Activated CD4-positive, alpha-beta memory T cell treated with anti-CD3 and anti-CD28 coated beads, Interleukin-2, amount 10 ng/mL, durations not matched to agents 7 days and 5 days (primary cell): ENCODE measurements at regions of chr22 and their contacts with region 1.

Region 1: GRCh38 chr22:30005213-30005857 is 74.9 kb upstream of the HORMAD2 start:
- DNase-seq: peak; percentile 68
- H3K4me3 Mint-ChIP-seq: no peak overlapping the region
- H3K27ac Mint-ChIP-seq: no peak overlapping the region
- H3K4me1 Mint-ChIP-seq: no peaks in the 10 kb centered on the region
- H3K27me3 Mint-ChIP-seq: no peaks in the 10 kb centered on the region

Region 2: DNA sequence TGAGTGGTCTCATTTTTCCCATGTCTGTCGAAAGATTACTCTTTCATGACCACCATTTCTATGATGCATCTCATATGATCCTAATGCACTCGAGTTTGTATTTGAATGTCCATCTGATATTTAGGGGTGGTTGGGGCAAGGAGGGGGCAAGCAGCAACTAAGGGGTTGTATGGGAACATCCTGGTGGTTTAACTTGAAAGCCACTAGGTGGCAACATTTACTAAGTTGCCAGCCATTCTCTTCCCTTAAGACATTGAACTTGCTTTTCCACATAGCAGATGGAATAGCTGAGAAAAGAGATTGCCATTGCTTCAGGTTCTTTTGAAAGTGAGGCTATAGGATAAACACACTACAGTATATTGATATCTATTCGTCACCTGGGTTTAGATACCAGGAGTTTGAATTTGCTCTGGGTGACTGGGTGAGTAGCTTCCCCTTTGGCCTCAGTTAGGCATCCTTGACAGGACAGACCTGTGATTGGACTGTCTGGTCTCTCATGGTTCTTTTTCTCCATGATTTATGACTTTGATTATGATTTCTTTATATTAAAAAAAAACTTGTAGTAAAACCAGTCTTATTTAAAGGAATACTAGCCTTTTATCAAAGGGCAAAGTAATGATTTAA is 369.5 kb before region 1 on chr22:
- CTCF ChIA-PET with region 1: interaction called, 15 read pairs
- POLR2A ChIA-PET with region 1: no interaction called
- DNase-seq: no peak
- H3K4me3 Mint-ChIP-seq: no peak overlapping the region
- H3K27ac Mint-ChIP-seq: no peak overlapping the region
- H3K4me1 Mint-ChIP-seq: peaks cover 37% of the 10 kb centered on the region
- H3K27me3 Mint-ChIP-seq: no peaks in the 10 kb centered on the region

Region 3: DNA sequence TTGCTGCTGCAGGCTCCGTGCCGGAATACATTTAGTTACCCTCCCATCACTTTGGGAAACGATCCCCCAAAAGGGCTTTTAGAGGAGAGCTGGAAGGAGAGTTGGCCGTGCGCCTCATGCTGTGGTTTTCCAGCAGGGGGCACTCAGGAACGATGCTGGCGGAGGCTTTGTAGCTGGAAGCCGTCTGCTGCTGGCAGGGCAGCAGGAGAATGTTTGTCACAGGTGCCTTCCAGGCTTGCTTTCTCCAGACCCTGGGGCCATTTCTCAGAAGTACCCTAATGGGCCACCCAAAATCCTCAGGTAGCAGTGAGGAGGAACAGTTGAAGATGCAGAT is 315.5 kb before region 1 on chr22:
- CTCF ChIA-PET with region 1: interaction called, 17 read pairs
- POLR2A ChIA-PET with region 1: no interaction called
- DNase-seq: peak; percentile 47
- H3K4me3 Mint-ChIP-seq: no peak overlapping the region
- H3K27ac Mint-ChIP-seq: no peak overlapping the region
- H3K4me1 Mint-ChIP-seq: peaks cover 2% of the 10 kb centered on the region
- H3K27me3 Mint-ChIP-seq: no peaks in the 10 kb centered on the region

Region 4: GRCh38 chr22:29892315-29893156 is 112.8 kb before region 1 on chr22:
- CTCF ChIA-PET with region 1: no interaction called
- POLR2A ChIA-PET with region 1: no interaction called
- DNase-seq: no peak
- H3K4me3 Mint-ChIP-seq: no peak overlapping the region
- H3K27ac Mint-ChIP-seq: no peak overlapping the region
- H3K4me1 Mint-ChIP-seq: no peaks in the 10 kb centered on the region
- H3K27me3 Mint-ChIP-seq: no peaks in the 10 kb centered on the region

Region 5: DNA sequence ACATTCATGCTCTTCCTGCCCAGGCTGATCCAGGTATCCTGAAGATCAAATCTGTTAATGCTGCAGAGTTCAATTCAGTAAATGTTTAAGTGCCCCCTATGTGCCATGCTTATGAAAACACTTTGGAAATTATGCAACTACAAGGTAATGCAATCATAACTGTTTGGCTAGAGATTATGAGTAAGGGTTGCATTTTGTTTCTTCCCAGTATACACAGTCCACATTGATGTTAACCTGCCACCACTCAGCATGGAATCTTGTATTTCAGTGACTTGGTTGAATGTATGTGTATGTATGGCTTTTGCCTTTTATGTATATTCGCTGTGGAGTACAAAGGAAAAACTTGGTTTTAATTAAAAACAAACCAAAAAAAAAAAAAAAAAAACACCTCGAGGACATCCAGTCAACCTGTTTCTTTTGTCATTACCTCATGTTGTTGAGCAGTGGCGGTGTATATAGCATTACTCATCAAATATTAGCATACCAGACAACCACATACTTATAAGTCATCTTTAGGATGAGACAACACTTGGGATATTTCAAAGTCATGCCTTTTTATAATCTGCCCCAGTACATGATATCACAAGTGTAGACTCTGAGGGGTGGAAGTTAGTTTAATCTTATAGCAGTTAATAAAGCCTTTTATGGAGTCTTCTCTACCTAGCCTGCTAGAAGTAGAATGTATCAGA is 11.2 kb before region 1 on chr22:
- CTCF ChIA-PET with region 1: interaction called, 23 read pairs
- POLR2A ChIA-PET with region 1: no interaction called
- DNase-seq: no peak
- H3K4me3 Mint-ChIP-seq: no peak overlapping the region
- H3K27ac Mint-ChIP-seq: no peak overlapping the region
- H3K4me1 Mint-ChIP-seq: peaks cover 9% of the 10 kb centered on the region
- H3K27me3 Mint-ChIP-seq: no peaks in the 10 kb centered on the region

Region 6: GRCh38 chr22:30023099-30023660 is 17.8 kb after region 1 on chr22:
- CTCF ChIA-PET with region 1: interaction called, 10 read pairs
- POLR2A ChIA-PET with region 1: no interaction called
- DNase-seq: no peak
- H3K4me3 Mint-ChIP-seq: no peak overlapping the region
- H3K27ac Mint-ChIP-seq: no peak overlapping the region
- H3K4me1 Mint-ChIP-seq: peaks cover 16% of the 10 kb centered on the region
- H3K27me3 Mint-ChIP-seq: no peaks in the 10 kb centered on the region